WTC11 (cell line): ENCODE measurements at regions of chr6 and their contacts with region 1.

Region 1: GRCh38 chr6:10521104-10521808 is at the start of gene GCNT2:
- DNase-seq: peak; percentile 63
- ATAC-seq: peak; percentile 85
- H3K4me3 Mint-ChIP-seq: peak within 1 kb of the TSS; percentile 51
- H3K27ac Mint-ChIP-seq: peak within 1 kb of the TSS; percentile 99
- H3K4me1 Mint-ChIP-seq: peaks cover 62% of the 10 kb centered on the region
- H3K27me3 Mint-ChIP-seq: no peaks in the 10 kb centered on the region
- CTCF ChIP-seq: no peak
- total RNA-seq, gene GCNT2: 51.2 to 66.7 TPM (median 62.7 TPM) in 3 replicates

Region 2: GRCh38 chr6:10510592-10511367 is 10.5 kb before region 1 on chr6:
- CTCF ChIA-PET with region 1: interaction called, 16 read pairs
- POLR2A ChIA-PET with region 1: no interaction called
- DNase-seq: peak; percentile 75
- ATAC-seq: peak; percentile 99
- H3K4me3 Mint-ChIP-seq: no peak overlapping the region
- H3K27ac Mint-ChIP-seq: no peak overlapping the region
- H3K4me1 Mint-ChIP-seq: peaks cover 18% of the 10 kb centered on the region
- H3K27me3 Mint-ChIP-seq: no peaks in the 10 kb centered on the region
- CTCF ChIP-seq: 0 out of 2 replicates have a peak, but pooled peaks have one; percentile 31